ENCODE measurements at regions of chr12 and their contacts with region 1.

Region 1: GRCh38 chr12:91630596-91631293 is 448.1 kb upstream of the DCN start:
- DNase-seq: peak in 1 of 4 experiments; percentile 51
- ATAC-seq: no peak
- H3K4me3 ChIP-seq: no peak overlapping the region
- H3K27ac ChIP-seq: peak overlapping the region; percentile 53; the same call in 1 of the 3 replicates
- H3K4me1 ChIP-seq: peaks cover 13 to 15% of the 10 kb centered on the region in 2 experiments; a peak in 4 of 5 replicates
- H3K27me3 ChIP-seq: no peaks in the 10 kb centered on the region
- CTCF ChIP-seq: no peak
- EP300 ChIP-seq: no peak
- POLR2A ChIP-seq: no peak
- RAD21 ChIP-seq: no peak

Region 2: DNA sequence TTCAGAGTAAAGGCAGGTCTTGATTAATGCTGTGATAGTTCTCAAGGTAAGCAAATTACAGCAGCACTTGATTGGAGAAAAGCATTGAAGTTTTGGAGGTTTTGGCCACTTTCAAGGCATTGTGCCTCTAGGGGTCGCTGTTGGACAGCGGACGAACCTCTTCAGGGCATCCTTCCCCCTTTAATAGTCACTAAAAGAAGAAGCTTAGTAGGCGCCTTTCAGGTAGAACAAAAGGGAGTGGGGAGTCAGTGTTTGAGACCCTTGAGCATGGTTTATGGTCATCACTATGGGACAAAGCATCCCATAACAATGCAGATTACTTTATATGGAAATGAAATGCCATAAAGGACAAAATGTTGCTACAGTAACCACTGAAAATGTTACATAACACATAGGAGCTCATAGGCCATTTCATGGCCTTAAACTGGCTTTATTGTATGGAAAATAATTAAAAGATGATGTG is 248.6 kb before region 1 on chr12:
- CTCF ChIA-PET with region 1: no interaction called
- POLR2A ChIA-PET with region 1: no interaction called
- in situ Hi-C with region 1: no loop called
- intact Hi-C with region 1: loop called (anchors 10 kb)
- DNase-seq: peak; percentile 42 to 85 (median 50)
- ATAC-seq: peak; percentile 84
- H3K4me3 ChIP-seq: no peak overlapping the region
- H3K27ac ChIP-seq: no peak overlapping the region
- H3K4me1 ChIP-seq: no peaks in the 10 kb centered on the region
- H3K27me3 ChIP-seq: no peaks in the 10 kb centered on the region
- CTCF ChIP-seq: peak; percentile 66 to 88 (median 82)
- EP300 ChIP-seq: no peak
- POLR2A ChIP-seq: no peak
- RAD21 ChIP-seq: peak; percentile 79 to 83

Region 3: GRCh38 chr12:91577586-91578539 is 52.9 kb before region 1 on chr12:
- CTCF ChIA-PET with region 1: no interaction called
- POLR2A ChIA-PET with region 1: interaction called, 3 read pairs
- in situ Hi-C with region 1: no loop called
- intact Hi-C with region 1: loop called (anchors 5 kb)
- DNase-seq: peak in 2 of 4 experiments; percentile 11 to 29
- ATAC-seq: peak; percentile 67; the same call in 2 of the 3 replicates
- H3K4me3 ChIP-seq: no peak overlapping the region
- H3K27ac ChIP-seq: no peak overlapping the region
- H3K4me1 ChIP-seq: no peaks in the 10 kb centered on the region
- H3K27me3 ChIP-seq: no peaks in the 10 kb centered on the region
- CTCF ChIP-seq: peak; percentile 2 to 58 (median 30); a peak in 3 of 6 replicates
- EP300 ChIP-seq: no peak
- POLR2A ChIP-seq: no peak
- RAD21 ChIP-seq: peak; percentile 22 to 42; a peak in 2 of 4 replicates

Region 4: DNA sequence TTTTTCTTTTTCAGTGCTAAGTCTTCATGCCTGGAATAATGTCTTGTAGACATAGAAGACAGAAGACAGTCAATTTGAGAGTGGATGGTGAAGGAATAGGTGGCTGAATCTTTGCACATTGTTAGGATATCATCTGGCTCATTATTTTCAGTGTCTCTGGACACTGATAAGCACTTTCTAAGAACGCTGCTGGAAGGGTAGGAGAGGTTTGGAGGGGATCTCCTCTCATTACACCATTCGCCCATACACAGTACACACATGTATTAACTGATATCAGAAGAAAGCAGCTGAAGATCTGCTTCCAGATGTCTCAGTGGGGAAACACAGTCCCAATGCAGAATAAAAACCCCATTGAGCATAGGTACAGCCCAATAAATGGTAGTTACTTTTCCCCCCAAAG is 13.0 kb after region 1 on chr12:
- CTCF ChIA-PET with region 1: no interaction called
- POLR2A ChIA-PET with region 1: interaction called, 41 read pairs
- in situ Hi-C with region 1: no loop called
- intact Hi-C with region 1: no loop called
- DNase-seq: peak in 1 of 4 experiments; percentile 36
- ATAC-seq: peak; percentile 62
- H3K4me3 ChIP-seq: no peak overlapping the region
- H3K27ac ChIP-seq: no peak overlapping the region
- H3K4me1 ChIP-seq: peaks cover 0 to 4% of the 10 kb centered on the region in 2 experiments; a peak in 2 of 5 replicates
- H3K27me3 ChIP-seq: no peaks in the 10 kb centered on the region
- CTCF ChIP-seq: no peak
- EP300 ChIP-seq: no peak
- POLR2A ChIP-seq: no peak
- RAD21 ChIP-seq: no peak

Region 5: DNA sequence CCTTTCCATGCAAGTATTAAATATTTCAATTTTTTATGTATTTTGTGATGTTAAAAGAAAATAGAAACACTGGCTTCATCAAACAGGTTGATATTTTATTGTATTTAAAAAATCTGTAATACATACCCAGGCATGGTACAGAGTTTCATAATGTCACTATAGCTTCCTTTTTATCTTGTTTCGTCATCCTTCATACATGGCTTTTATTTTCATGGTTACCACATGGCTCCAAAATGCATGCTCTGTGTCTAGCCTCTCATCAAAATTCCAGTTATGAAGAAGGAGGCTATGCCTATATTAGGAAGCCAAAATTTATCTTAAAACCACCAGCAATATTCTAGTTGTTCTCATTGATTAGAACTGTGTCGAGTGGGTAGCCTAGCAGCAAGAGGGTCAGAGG is 50.1 kb after region 1 on chr12:
- CTCF ChIA-PET with region 1: no interaction called
- POLR2A ChIA-PET with region 1: interaction called, 23 read pairs
- in situ Hi-C with region 1: no loop called
- intact Hi-C with region 1: loop called (anchors 2 kb)
- DNase-seq: peak in 1 of 4 experiments; percentile 25
- ATAC-seq: peak; percentile 68
- H3K4me3 ChIP-seq: peak overlapping the region; percentile 49
- H3K27ac ChIP-seq: peak overlapping the region; percentile 83
- H3K4me1 ChIP-seq: peaks cover 0 to 8% of the 10 kb centered on the region in 2 experiments; a peak in 2 of 5 replicates
- H3K27me3 ChIP-seq: no peaks in the 10 kb centered on the region
- CTCF ChIP-seq: no peak
- EP300 ChIP-seq: no peak
- POLR2A ChIP-seq: no peak
- RAD21 ChIP-seq: no peak

Region 6: DNA sequence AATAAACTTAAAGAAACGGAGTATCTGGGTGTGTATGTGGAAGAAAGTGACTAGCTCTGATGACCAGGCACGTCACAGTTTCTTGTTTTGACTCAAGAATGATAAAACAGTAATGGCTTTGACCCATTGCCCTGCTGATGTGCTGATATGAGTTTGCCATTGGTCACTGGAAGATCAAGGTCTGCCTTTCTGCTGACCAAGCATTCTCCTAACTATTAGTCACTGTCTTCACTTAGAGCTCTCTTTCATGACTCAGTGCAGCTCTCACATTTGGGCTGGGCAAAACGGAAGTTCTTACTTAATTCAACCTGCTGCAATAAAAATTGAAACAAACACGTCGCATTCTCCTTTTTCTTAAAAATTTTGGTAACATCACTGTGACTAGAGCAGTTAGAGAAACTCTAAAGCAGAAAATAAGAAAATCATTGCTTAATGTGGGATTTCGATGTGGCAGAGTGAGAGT is 148.2 kb after region 1 on chr12:
- CTCF ChIA-PET with region 1: no interaction called
- POLR2A ChIA-PET with region 1: interaction called, 5 read pairs
- in situ Hi-C with region 1: no loop called
- intact Hi-C with region 1: loop called (anchors 10 kb)
- DNase-seq: peak; percentile 20 to 77 (median 40)
- ATAC-seq: peak; percentile 98
- H3K4me3 ChIP-seq: no peak overlapping the region
- H3K27ac ChIP-seq: no peak overlapping the region
- H3K4me1 ChIP-seq: peaks cover 0 to 12% of the 10 kb centered on the region in 2 experiments; a peak in 3 of 5 replicates
- H3K27me3 ChIP-seq: no peaks in the 10 kb centered on the region
- CTCF ChIP-seq: no peak
- EP300 ChIP-seq: peak; percentile 54; the same call in 1 of the 2 replicates
- POLR2A ChIP-seq: no peak
- RAD21 ChIP-seq: no peak